K562 (cell line): ENCODE measurements at regions of chr10 and their contacts with region 1.

Region 1: DNA sequence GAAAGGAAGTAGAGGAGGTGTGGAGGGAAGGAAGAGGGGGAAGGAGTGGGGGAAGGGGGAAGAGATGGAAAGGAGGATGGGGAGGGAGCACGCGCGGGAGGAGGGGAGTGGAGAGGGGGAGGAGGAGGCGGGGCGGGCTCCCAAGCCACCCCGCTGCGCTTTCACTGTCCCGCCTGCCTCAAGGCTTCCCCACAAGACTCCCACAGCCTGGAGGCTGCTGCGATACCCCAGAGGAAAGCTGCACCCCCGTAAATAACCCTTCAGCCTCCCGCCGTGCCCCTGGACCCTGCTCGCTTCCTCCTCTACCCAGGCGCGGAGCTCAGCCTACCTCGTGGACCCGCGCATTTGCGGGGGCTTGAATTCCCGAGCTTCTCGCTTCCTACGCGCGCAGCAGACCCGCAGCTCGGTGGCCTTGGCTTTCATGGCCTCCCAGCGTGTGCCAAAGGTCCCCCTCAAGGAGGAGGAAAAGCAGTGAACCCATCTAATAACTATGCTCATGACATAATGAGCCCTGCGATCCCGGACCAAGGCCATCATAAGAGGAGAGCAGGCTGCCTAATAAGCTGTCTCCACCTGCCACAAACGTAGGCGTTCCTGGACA is at the start of gene C10orf67:
- DNase-seq: peak in 1 of 4 experiments; percentile 5
- ATAC-seq: no peak
- H3K4me3 ChIP-seq: no peak within 1 kb of the TSS
- H3K27ac ChIP-seq: no peak within 1 kb of the TSS
- H3K4me1 ChIP-seq: peaks cover 0 to 10% of the 10 kb centered on the region in 2 experiments; a peak in 2 of 5 replicates
- H3K27me3 ChIP-seq: peaks cover 8 to 21% of the 10 kb centered on the region in 2 experiments; a peak in 4 of 5 replicates
- CTCF ChIP-seq: no peak
- EP300 ChIP-seq: no peak
- POLR2A ChIP-seq: no peak
- RAD21 ChIP-seq: no peak
- polyA plus RNA-seq, gene C10orf67: not detected

Region 2: GRCh38 chr10:23694446-23694920 is 350.1 kb after region 1 on chr10:
- CTCF ChIA-PET with region 1: no interaction called
- POLR2A ChIA-PET with region 1: no interaction called
- in situ Hi-C with region 1: loop called (anchors 25 kb)
- intact Hi-C with region 1: no loop called
- DNase-seq: no peak
- ATAC-seq: no peak
- H3K4me3 ChIP-seq: no peak overlapping the region
- H3K27ac ChIP-seq: no peak overlapping the region
- H3K4me1 ChIP-seq: peaks cover 0 to 8% of the 10 kb centered on the region in 2 experiments; a peak in 1 of 5 replicates
- H3K27me3 ChIP-seq: 0 out of 5 replicates have a peak, but pooled peaks cover 0 to 9% of the 10 kb centered on the region in 2 experiments
- CTCF ChIP-seq: no peak
- EP300 ChIP-seq: no peak
- POLR2A ChIP-seq: no peak
- RAD21 ChIP-seq: no peak

Region 3: GRCh38 chr10:24118246-24118645 is 773.9 kb after region 1 on chr10:
- CTCF ChIA-PET with region 1: no interaction called
- POLR2A ChIA-PET with region 1: no interaction called
- in situ Hi-C with region 1: no loop called
- intact Hi-C with region 1: no loop called
- DNase-seq: no peak
- ATAC-seq: no peak
- H3K4me3 ChIP-seq: no peak overlapping the region
- H3K27ac ChIP-seq: no peak overlapping the region
- H3K4me1 ChIP-seq: no peaks in the 10 kb centered on the region
- H3K27me3 ChIP-seq: no peaks in the 10 kb centered on the region
- CTCF ChIP-seq: no peak
- EP300 ChIP-seq: no peak
- POLR2A ChIP-seq: no peak
- RAD21 ChIP-seq: no peak